AG04450 (cell line): ENCODE measurements at regions of chr17 and their contacts with region 1.

Region 1: GRCh38 chr17:1331708-1332107 is 52.2 kb downstream of the TRARG1 start:
- DNase-seq: no peak
- H3K4me3 ChIP-seq: no peak overlapping the region
- H3K27ac ChIP-seq: no peak overlapping the region
- H3K27me3 ChIP-seq: no peaks in the 10 kb centered on the region
- CTCF ChIP-seq: no peak

Region 2: DNA sequence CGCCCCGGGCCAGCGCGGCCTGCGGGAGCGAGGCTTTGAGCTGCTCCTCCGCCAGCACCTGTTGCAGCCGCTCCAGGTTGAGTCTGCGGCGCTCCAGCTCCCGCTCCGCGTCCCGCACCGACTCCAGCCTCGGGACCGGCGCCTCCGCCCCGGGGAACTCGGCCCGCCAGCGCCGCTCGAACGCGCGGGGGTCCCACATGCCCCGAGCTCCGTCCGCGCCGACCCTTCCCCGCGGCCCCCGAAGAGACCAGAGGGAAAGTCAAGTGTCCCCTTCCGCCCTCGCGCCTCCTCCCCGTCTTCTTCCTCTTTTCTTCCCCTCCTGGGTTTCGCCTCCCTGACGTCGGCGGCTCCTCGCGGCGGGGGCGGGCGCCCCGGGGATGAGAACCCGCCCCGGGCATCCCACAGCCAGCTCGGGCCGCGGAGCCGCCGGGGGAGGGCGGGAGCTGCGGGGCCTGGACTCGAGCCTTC is 102.2 kb before region 1 on chr17:
- CTCF ChIA-PET with region 1: no interaction called
- POLR2A ChIA-PET with region 1: no interaction called
- DNase-seq: no peak
- H3K4me3 ChIP-seq: peak overlapping the region; percentile 48
- H3K27ac ChIP-seq: no peak overlapping the region
- H3K27me3 ChIP-seq: peaks cover 38% of the 10 kb centered on the region
- CTCF ChIP-seq: no peak

Region 3: GRCh38 chr17:1260086-1260769 is 71.5 kb before region 1 on chr17:
- CTCF ChIA-PET with region 1: interaction called, 11 read pairs
- POLR2A ChIA-PET with region 1: interaction called, 6 read pairs
- DNase-seq: no peak
- H3K4me3 ChIP-seq: peak overlapping the region; percentile 61
- H3K27ac ChIP-seq: no peak overlapping the region
- H3K27me3 ChIP-seq: peaks cover 6% of the 10 kb centered on the region
- CTCF ChIP-seq: no peak